ENCODE measurements at regions of chr14 and their contacts with region 1.

Region 1: DNA sequence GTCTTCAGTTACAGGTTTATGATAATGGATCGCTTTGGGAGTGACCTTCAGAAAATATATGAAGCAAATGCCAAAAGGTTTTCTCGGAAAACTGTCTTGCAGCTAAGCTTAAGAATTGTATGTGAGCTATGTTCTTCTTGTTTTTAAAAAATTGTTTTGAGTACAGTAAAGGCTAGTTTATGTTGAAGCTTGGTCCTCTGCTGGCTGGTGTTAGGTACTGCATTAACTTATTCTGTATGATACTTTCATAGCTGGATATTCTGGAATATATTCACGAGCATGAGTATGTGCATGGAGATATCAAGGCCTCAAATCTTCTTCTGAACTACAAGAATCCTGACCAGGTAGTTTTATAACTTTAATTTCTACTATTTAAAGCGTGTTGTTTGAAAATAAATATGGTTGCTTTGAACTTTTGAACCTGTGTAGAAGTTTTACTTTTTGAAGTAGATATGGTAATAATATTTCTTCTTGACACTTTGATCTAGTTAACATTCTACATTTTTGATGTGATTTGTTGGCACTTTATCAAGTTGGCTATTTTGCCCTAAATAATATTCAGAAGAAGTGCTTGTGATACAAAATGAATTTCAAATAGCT is 55.7 kb downstream of the VRK1 start:
- DNase-seq: peak; percentile 34
- H3K4me3 Mint-ChIP-seq: no peak overlapping the region
- H3K27ac Mint-ChIP-seq: no peak overlapping the region
- H3K4me1 Mint-ChIP-seq: peaks cover 12% of the 10 kb centered on the region
- H3K27me3 Mint-ChIP-seq: no peaks in the 10 kb centered on the region

Region 2: DNA sequence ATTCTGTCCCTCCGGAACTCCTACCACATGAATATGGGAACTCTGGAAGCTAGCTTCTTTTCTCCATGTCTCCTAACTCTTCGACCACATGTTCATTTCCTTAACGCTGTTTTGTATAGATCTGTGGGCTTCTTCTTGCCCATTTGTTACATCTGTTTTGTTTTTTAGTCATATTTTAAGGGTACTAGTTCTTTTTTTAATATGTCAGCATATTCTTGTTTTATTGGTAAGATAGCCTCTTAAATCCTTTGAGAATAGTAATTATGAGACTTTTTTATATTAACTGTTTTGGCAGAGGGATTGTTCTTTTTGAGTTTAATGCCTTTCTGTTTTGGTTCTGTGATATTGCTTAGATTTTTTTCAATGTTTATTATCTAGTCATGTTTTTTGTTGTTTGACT is 14.7 kb after region 1 on chr14:
- CTCF ChIA-PET with region 1: interaction called, 11 read pairs
- POLR2A ChIA-PET with region 1: no interaction called
- DNase-seq: no peak
- H3K4me3 Mint-ChIP-seq: no peak overlapping the region
- H3K27ac Mint-ChIP-seq: no peak overlapping the region
- H3K4me1 Mint-ChIP-seq: no peaks in the 10 kb centered on the region
- H3K27me3 Mint-ChIP-seq: no peaks in the 10 kb centered on the region

Measured in activated CD4-positive, alpha-beta T cell treated with anti-CD3 and anti-CD28 coated beads, Interleukin-2, amount 10 ng/mL, durations not matched to agents 7 days and 5 days (primary cell).